Activated T-helper 1 cell treated with anti-CD3 and anti-CD28 coated beads, Interleukin-12 subunit alpha, Interleukin-12 subunit beta, Interleukin-2, Interleukin-4 antibody, amounts not matched to agents 30 ng/mL and 10 ng/mL and 1 ng/mL, durations not matched to agents 14 hours and 24 hours and 36 hours (primary cell): ENCODE measurements at regions of chr1 and their contacts with region 1.

Region 1: GRCh38 chr1:203625628-203626019 is 1.0 kb upstream of the ATP2B4 start:
- DNase-seq: peak; percentile 55
- H3K4me3 Mint-ChIP-seq: peak overlapping the region; percentile 92
- H3K27ac Mint-ChIP-seq: peak overlapping the region; percentile 86
- H3K4me1 Mint-ChIP-seq: peaks cover 87% of the 10 kb centered on the region
- H3K27me3 Mint-ChIP-seq: no peaks in the 10 kb centered on the region

Region 2: DNA sequence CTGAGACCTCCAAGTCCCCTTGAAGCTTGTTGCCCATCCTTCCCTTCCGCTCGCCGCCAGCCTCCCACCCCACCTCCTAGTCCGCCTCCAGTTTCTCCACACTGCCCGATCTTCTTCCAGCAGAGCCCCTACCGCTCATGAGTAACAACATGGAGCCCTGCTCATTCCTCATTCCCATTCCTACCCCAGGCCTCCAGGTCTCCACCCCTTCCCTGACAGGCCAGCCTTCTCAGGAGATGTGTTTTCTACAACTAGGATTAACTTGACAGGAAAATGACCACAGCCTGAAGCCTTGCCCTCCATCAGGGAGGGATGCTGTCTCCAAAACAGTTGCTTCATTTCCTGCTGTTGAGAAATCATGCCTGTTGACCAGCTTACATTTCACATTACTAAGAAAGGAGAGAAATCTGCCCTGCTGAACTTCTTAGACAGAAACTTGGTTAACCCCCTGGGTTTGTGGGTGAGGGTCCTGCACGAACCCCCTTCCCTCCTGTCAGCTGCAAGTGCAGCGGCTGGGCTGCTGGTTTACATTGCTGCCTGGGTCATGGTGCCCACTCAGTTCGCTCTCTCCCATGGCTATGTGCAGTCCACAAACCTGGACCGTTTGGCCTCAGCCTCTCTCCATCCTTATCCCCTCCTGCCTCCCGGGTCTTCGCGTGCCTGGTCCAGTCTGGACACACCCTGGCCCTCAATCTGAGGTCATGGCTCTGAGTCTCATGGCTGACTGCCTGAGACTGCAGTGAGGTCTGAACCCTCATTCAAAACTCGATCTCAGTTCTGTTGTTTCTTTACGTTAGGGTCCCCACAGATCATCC is 423.0 kb before region 1 on chr1:
- intact Hi-C with region 1: no loop called
- DNase-seq: no peak
- H3K4me3 Mint-ChIP-seq: no peak overlapping the region
- H3K27ac Mint-ChIP-seq: no peak overlapping the region
- H3K4me1 Mint-ChIP-seq: no peaks in the 10 kb centered on the region
- H3K27me3 Mint-ChIP-seq: peaks cover 9% of the 10 kb centered on the region

Region 3: GRCh38 chr1:203267347-203267846 is 358.2 kb before region 1 on chr1:
- intact Hi-C with region 1: loop called (anchors 5 kb)
- DNase-seq: peak; percentile 78
- H3K4me3 Mint-ChIP-seq: peak overlapping the region; percentile 79
- H3K27ac Mint-ChIP-seq: peak overlapping the region; percentile 19
- H3K4me1 Mint-ChIP-seq: peaks cover 15% of the 10 kb centered on the region
- H3K27me3 Mint-ChIP-seq: peaks cover 6% of the 10 kb centered on the region

Region 4: GRCh38 chr1:203512830-203513611 is 112.6 kb before region 1 on chr1:
- intact Hi-C with region 1: loop called (anchors 1 kb)
- DNase-seq: peak; percentile 19
- H3K4me3 Mint-ChIP-seq: peak overlapping the region; percentile 50
- H3K27ac Mint-ChIP-seq: peak overlapping the region; percentile 95
- H3K4me1 Mint-ChIP-seq: peaks cover 30% of the 10 kb centered on the region
- H3K27me3 Mint-ChIP-seq: no peaks in the 10 kb centered on the region

Region 5: DNA sequence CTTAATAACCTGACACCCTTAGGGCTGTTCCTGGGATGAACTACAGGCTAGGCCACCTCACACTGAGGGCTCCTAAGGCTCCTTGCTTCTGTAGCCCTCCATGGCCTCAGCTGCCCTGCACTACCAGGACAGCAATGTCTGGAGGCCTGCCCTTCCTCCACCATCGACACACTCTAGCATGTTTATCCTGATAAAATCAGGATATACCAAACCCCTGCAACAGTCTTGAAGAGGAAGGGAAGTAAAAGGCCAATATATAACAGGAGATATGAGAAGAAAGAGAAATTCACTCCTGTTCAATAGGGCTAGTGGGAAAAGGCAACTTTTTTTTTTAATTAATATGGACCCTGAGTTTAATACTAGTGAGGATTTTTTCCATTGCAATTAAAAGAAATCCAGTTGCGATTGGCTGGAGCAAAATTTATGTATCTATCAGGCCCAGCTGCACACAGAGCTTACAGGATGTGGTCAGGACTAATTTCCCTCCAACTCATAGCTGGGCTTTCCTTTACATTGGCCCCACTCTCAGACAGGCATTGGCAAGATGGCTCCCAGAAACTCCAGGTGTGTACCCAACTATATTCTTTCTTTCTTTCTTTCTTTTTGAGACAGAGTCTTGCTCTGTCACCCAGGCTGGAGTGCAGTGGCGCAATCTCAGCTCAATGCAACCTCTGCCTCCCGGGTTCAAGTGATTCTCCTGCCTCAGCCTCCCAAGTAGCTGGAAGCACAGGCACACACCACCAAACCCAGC is 12.5 kb before region 1 on chr1:
- intact Hi-C with region 1: loop called (anchors 1 kb)
- DNase-seq: no peak
- H3K4me3 Mint-ChIP-seq: no peak overlapping the region
- H3K27ac Mint-ChIP-seq: peak overlapping the region; percentile 74
- H3K4me1 Mint-ChIP-seq: peaks cover 57% of the 10 kb centered on the region
- H3K27me3 Mint-ChIP-seq: no peaks in the 10 kb centered on the region

Region 6: GRCh38 chr1:203682473-203683383 is 57.1 kb after region 1 on chr1:
- intact Hi-C with region 1: loop called (anchors 1 kb)
- DNase-seq: peak; percentile 75
- H3K4me3 Mint-ChIP-seq: peak overlapping the region; percentile 40
- H3K27ac Mint-ChIP-seq: peak overlapping the region; percentile 95
- H3K4me1 Mint-ChIP-seq: peaks cover 52% of the 10 kb centered on the region
- H3K27me3 Mint-ChIP-seq: no peaks in the 10 kb centered on the region

Region 7: GRCh38 chr1:203888807-203889251 is 263.2 kb after region 1 on chr1:
- intact Hi-C with region 1: no loop called
- DNase-seq: no peak
- H3K4me3 Mint-ChIP-seq: no peak overlapping the region
- H3K27ac Mint-ChIP-seq: no peak overlapping the region
- H3K4me1 Mint-ChIP-seq: no peaks in the 10 kb centered on the region
- H3K27me3 Mint-ChIP-seq: peaks cover 2% of the 10 kb centered on the region

Region 8: GRCh38 chr1:204516180-204516879 is 890.7 kb after region 1 on chr1 and contains the start of gene MDM4:
- intact Hi-C with region 1: loop called (anchors 10 kb)
- DNase-seq: peak; percentile 90
- H3K4me3 Mint-ChIP-seq: no peak within 1 kb of the TSS
- H3K27ac Mint-ChIP-seq: no peak within 1 kb of the TSS
- H3K4me1 Mint-ChIP-seq: peaks cover 45% of the 10 kb centered on the region
- H3K27me3 Mint-ChIP-seq: no peaks in the 10 kb centered on the region
- total RNA-seq, gene MDM4: 75.5 and 80.3 TPM in 2 replicates